ENCODE measurements at regions of chr3 and their contacts with region 1.

Region 1: GRCh38 chr3:186241910-186242821 is 119.9 kb downstream of the DGKG start:
- DNase-seq: peak; percentile 84
- ATAC-seq: peak; percentile 97
- H3K4me3 Mint-ChIP-seq: peak overlapping the region; percentile 30
- H3K27ac Mint-ChIP-seq: no peak overlapping the region
- H3K4me1 Mint-ChIP-seq: peaks cover 9% of the 10 kb centered on the region
- H3K27me3 Mint-ChIP-seq: peaks cover 9% of the 10 kb centered on the region

Region 2: GRCh38 chr3:185976977-185977678 is 265.0 kb before region 1 on chr3:
- CTCF ChIA-PET with region 1: interaction called, 10 read pairs
- POLR2A ChIA-PET with region 1: no interaction called
- intact Hi-C with region 1: loop called (anchors 1 to 2 kb)
- DNase-seq: peak; percentile 93
- ATAC-seq: peak; percentile 91
- H3K4me3 Mint-ChIP-seq: no peak overlapping the region
- H3K27ac Mint-ChIP-seq: peak overlapping the region; percentile 11
- H3K4me1 Mint-ChIP-seq: peaks cover 18% of the 10 kb centered on the region
- H3K27me3 Mint-ChIP-seq: no peaks in the 10 kb centered on the region

Region 3: GRCh38 chr3:185983495-185984141 is 258.5 kb before region 1 on chr3:
- CTCF ChIA-PET with region 1: interaction called, 10 read pairs
- POLR2A ChIA-PET with region 1: no interaction called
- intact Hi-C with region 1: loop called (anchors 1 to 2 kb)
- DNase-seq: peak; percentile 71
- ATAC-seq: peak; percentile 83
- H3K4me3 Mint-ChIP-seq: no peak overlapping the region
- H3K27ac Mint-ChIP-seq: no peak overlapping the region
- H3K4me1 Mint-ChIP-seq: peaks cover 4% of the 10 kb centered on the region
- H3K27me3 Mint-ChIP-seq: peaks cover 7% of the 10 kb centered on the region

Region 4: GRCh38 chr3:186097663-186098451 is 144.3 kb before region 1 on chr3:
- CTCF ChIA-PET with region 1: interaction called, 4 read pairs
- POLR2A ChIA-PET with region 1: no interaction called
- intact Hi-C with region 1: loop called in 1 of 2 experiments (anchors 5 kb)
- DNase-seq: peak; percentile 11
- ATAC-seq: peak; percentile 60
- H3K4me3 Mint-ChIP-seq: no peak overlapping the region
- H3K27ac Mint-ChIP-seq: no peak overlapping the region
- H3K4me1 Mint-ChIP-seq: peaks cover 3% of the 10 kb centered on the region
- H3K27me3 Mint-ChIP-seq: peaks cover 62% of the 10 kb centered on the region